Heart left ventricle (tissue), 16 donors: ENCODE measurements at regions of chr19 and their contacts with region 1.

Region 1: DNA sequence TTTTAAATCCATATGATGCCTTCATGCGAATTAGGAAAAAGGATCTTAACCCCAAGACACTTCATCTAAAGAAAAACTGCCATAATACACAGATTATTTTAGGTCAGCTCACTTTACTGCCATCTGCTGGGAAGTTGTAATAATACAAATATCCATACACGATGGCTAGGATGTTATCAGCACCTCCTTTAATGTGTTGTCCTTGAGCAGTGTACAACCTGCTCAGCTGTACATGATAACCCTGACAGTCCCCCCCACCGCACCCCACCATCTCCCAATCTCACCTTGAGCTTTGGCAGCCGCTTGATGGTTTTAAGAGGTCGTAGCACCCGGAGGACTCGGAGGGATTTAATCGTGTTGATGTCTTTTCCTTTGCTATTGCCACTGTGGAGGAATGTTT is 112.2 kb downstream of the IER2 start:
- DNase-seq: no peak
- ATAC-seq: peak; percentile 26 to 67 (median 57)
- H3K4me3 ChIP-seq: no peak overlapping the region
- H3K27ac ChIP-seq: no peak overlapping the region
- H3K4me1 ChIP-seq: peaks cover 0 to 18% (median 0%) of the 10 kb centered on the region in 12 donors
- H3K27me3 ChIP-seq: peaks cover 0 to under 1% (median 0%) of the 10 kb centered on the region in 9 donors
- CTCF ChIP-seq: peak; percentile 40 to 73 (median 60)
- POLR2A ChIP-seq: no peak

Region 2: DNA sequence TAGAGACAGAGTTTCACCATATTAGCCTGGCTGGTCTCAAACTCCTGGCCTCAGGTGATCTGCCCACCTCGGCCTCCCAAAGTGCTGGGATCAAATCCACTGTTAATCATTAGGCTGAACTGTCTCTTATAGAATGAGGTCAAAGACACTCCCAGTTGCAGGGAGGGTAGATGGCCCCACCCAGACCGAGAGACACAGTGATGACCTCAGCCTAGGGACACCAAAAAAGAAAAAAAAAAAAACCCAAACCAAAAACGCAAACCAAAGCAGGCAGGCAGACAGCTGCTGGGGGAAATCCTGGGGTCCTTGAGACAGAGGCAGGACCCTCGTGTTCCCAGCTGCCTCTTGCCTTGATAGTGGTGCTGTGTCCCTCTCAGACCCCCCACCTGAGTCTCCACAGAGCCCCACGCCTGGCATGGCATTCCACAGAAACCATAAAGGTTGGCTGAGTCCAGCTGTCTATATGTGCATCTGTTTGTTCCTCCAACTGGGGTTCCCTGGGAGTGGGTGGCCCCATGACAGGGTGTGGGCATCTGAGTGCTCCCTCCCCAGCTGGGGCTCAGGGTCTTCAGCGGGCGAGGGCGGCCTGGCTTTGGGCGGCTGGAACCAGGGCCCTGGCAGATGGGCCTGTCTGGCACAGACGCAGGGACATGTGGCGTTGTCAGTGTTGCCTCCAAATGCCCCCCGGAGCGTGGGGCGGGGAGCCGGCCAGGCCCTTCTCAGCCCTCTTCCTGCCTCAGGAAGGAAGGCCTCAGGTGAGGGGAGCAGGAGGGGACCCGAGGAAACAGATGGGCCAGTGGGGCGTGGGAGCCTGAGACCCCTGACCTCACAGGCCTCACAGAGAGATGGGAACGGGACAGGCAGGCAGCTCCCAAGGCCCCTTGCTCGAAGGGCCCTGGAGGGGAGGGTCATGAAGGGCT is 287.9 kb before region 1 on chr19:
- intact Hi-C with region 1: loop called in 9 of 10 experiments (anchors 1 to 5 kb)
- DNase-seq: no peak
- ATAC-seq: no peak
- H3K4me3 ChIP-seq: no peak overlapping the region
- H3K27ac ChIP-seq: no peak overlapping the region
- H3K4me1 ChIP-seq: peaks cover 0 to 28% (median 4%) of the 10 kb centered on the region in 12 donors
- H3K27me3 ChIP-seq: no peaks in the 10 kb centered on the region
- CTCF ChIP-seq: no peak
- POLR2A ChIP-seq: no peak

Region 3: GRCh38 chr19:12983542-12984142 is 278.8 kb before region 1 on chr19:
- intact Hi-C with region 1: loop called in 8 of 10 experiments (anchors 1 to 5 kb)
- DNase-seq: peak; percentile 73 to 92 (median 83)
- ATAC-seq: peak; percentile 30 to 83 (median 78)
- H3K4me3 ChIP-seq: peak overlapping the region in 10 of 12 donors; percentile 26 to 50 (median 42)
- H3K27ac ChIP-seq: peak overlapping the region in 1 of 12 donors; percentile 47
- H3K4me1 ChIP-seq: peaks cover 0 to 28% (median 15%) of the 10 kb centered on the region in 12 donors
- H3K27me3 ChIP-seq: peaks cover 0 to 5% (median 0%) of the 10 kb centered on the region in 9 donors
- CTCF ChIP-seq: peak; percentile 76 to 99 (median 97)
- POLR2A ChIP-seq: peak in 1 of 2 donors; percentile 27

Region 4: GRCh38 chr19:13022859-13023636 is 239.4 kb before region 1 on chr19:
- intact Hi-C with region 1: no loop called
- DNase-seq: peak; percentile 88 to 93 (median 90)
- ATAC-seq: peak; percentile 83 to 89 (median 84)
- H3K4me3 ChIP-seq: peak overlapping the region in 11 of 12 donors; percentile 24 to 64 (median 50)
- H3K27ac ChIP-seq: peak overlapping the region; percentile 86 to 97 (median 93)
- H3K4me1 ChIP-seq: peaks cover 8 to 97% (median 81%) of the 10 kb centered on the region in 12 donors
- H3K27me3 ChIP-seq: peaks cover 0 to 11% (median 0%) of the 10 kb centered on the region in 9 donors
- CTCF ChIP-seq: peak in 2 of 12 donors; percentile 2 to 3
- POLR2A ChIP-seq: no peak

Region 5: GRCh38 chr19:13104360-13104847 is 158.0 kb before region 1 on chr19:
- intact Hi-C with region 1: loop called in 1 of 10 experiments (anchors 5 kb)
- DNase-seq: peak; percentile 83 to 89 (median 88)
- ATAC-seq: peak; percentile 15 to 58 (median 22)
- H3K4me3 ChIP-seq: peak overlapping the region in 9 of 12 donors; percentile 8 to 60 (median 27)
- H3K27ac ChIP-seq: peak overlapping the region; percentile 43 to 98 (median 92)
- H3K4me1 ChIP-seq: peaks cover 6 to 61% (median 44%) of the 10 kb centered on the region in 12 donors
- H3K27me3 ChIP-seq: no peaks in the 10 kb centered on the region
- CTCF ChIP-seq: peak; percentile 49 to 82 (median 66)
- POLR2A ChIP-seq: no peak

Region 6: DNA sequence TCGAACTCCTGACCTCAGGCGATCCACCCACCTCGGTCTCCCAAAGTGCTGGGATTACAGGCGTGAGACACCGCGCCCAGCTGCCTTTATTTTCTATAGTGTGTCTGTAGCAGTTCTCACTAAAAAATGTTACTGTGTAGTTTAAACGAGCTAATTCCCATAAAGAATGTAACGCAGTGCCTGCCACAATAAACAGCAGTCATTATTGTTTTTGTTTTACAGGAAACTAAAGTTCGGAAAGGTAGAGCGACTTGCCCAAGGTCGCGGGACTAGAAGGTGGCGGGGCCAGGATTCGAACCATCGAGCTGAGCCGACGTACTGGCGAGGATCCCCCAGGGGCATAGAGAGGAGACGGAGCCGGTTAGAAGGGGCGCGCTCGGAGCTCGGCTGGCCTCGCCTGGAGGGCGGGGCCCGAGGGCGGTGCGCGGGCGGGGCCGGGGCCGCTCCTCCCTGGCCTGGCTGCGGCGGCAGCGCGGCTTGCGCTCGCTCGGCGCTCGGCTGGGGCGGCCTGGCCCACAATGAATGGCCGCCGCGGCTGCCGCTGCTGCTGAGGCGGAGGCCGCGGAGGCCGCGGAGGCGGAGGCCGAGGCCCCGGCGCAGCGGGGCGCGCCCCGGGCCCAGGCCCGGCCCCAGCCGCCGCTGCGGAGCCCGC is 144.6 kb before region 1 on chr19 and contains the start of gene NACC1:
- intact Hi-C with region 1: loop called in 1 of 10 experiments (anchors 10 kb)
- DNase-seq: peak; percentile 91 to 95 (median 93)
- ATAC-seq: peak; percentile 84 to 95 (median 94)
- H3K4me3 ChIP-seq: peak within 1 kb of the TSS; percentile 84 to 100 (median 97)
- H3K27ac ChIP-seq: peak within 1 kb of the TSS; percentile 10 to 88 (median 76)
- H3K4me1 ChIP-seq: peaks cover 5 to 53% (median 35%) of the 10 kb centered on the region in 12 donors
- H3K27me3 ChIP-seq: no peaks in the 10 kb centered on the region
- CTCF ChIP-seq: no peak
- POLR2A ChIP-seq: no peak
- total RNA-seq, gene NACC1: 28.7 to 88.2 (median 41.8) TPM

Region 7: DNA sequence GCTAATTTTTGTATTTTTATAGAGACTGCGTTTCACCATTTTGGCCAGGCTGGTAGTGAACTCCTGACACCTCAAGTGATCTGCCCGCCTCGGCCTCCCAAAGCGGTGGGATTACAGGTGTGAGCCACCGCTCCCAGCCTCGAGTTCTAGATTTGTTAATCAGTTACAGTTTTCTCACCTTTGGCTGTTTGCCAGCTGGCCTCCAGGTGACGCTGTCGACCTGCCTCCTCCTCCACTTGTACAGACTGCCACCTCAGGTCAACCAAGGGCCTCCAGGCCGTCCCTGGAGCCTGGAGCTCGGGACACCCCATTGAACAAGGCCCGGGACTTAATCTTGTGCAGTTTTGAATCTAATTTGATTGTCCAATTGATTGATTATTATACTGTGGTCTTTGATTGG is 66.8 kb before region 1 on chr19:
- intact Hi-C with region 1: loop called (anchors 1 to 5 kb)
- DNase-seq: no peak
- ATAC-seq: no peak
- H3K4me3 ChIP-seq: no peak overlapping the region
- H3K27ac ChIP-seq: no peak overlapping the region
- H3K4me1 ChIP-seq: peaks cover 0 to 18% (median 0%) of the 10 kb centered on the region in 12 donors
- H3K27me3 ChIP-seq: no peaks in the 10 kb centered on the region
- CTCF ChIP-seq: peak in 1 of 12 donors; percentile 25
- POLR2A ChIP-seq: no peak

Region 8: DNA sequence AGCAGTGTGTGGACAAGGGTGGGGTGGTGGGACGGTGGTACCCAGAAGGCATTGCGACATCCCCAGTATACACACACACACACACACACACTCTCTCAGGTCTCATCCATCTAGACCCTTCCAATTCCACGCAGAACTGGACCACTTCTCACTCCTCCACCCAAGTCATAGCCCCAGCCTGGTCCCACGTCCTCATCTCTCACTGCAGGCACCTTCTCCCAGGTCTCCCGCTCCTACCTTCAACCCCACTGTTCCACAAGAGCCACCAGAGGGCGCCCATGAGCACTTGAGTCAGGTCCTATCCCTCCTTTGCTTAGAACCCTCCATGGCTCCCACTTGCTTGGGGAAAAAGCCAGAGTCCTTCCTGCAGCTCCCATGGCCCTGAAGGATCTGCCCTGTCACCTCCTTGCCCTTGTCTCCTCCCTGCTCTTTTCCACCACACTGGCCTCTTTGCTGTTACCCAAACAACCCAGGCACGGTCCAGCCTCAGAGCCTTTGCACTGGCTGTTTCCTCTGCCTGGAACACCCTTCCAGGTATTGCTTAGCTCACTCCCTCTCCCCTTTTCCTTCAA is 49.6 kb before region 1 on chr19:
- intact Hi-C with region 1: loop called in 1 of 10 experiments (anchors 5 kb)
- DNase-seq: peak; percentile 27 to 80 (median 51)
- ATAC-seq: peak in 2 of 4 donors; percentile 28 to 36
- H3K4me3 ChIP-seq: no peak overlapping the region
- H3K27ac ChIP-seq: no peak overlapping the region
- H3K4me1 ChIP-seq: peaks cover 0 to 10% (median 0%) of the 10 kb centered on the region in 12 donors
- H3K27me3 ChIP-seq: no peaks in the 10 kb centered on the region
- CTCF ChIP-seq: peak; percentile 25 to 57 (median 48)
- POLR2A ChIP-seq: no peak

Region 9: GRCh38 chr19:13302526-13303270 is 40.2 kb after region 1 on chr19:
- intact Hi-C with region 1: no loop called
- DNase-seq: no peak
- ATAC-seq: no peak
- H3K4me3 ChIP-seq: no peak overlapping the region
- H3K27ac ChIP-seq: no peak overlapping the region
- H3K4me1 ChIP-seq: peaks cover 0 to 5% (median 0%) of the 10 kb centered on the region in 12 donors
- H3K27me3 ChIP-seq: peaks cover 9 to 74% (median 19%) of the 10 kb centered on the region in 9 donors
- CTCF ChIP-seq: no peak
- POLR2A ChIP-seq: no peak

Region 10: GRCh38 chr19:13408889-13409518 is 146.6 kb after region 1 on chr19:
- intact Hi-C with region 1: no loop called
- DNase-seq: no peak
- ATAC-seq: no peak
- H3K4me3 ChIP-seq: no peak overlapping the region
- H3K27ac ChIP-seq: no peak overlapping the region
- H3K4me1 ChIP-seq: no peaks in the 10 kb centered on the region
- H3K27me3 ChIP-seq: peaks cover 0 to 3% (median 0%) of the 10 kb centered on the region in 9 donors
- CTCF ChIP-seq: no peak
- POLR2A ChIP-seq: no peak